Caco-2 (cell line): ENCODE measurements at regions of chr7 and their contacts with region 1.

Region 1: DNA sequence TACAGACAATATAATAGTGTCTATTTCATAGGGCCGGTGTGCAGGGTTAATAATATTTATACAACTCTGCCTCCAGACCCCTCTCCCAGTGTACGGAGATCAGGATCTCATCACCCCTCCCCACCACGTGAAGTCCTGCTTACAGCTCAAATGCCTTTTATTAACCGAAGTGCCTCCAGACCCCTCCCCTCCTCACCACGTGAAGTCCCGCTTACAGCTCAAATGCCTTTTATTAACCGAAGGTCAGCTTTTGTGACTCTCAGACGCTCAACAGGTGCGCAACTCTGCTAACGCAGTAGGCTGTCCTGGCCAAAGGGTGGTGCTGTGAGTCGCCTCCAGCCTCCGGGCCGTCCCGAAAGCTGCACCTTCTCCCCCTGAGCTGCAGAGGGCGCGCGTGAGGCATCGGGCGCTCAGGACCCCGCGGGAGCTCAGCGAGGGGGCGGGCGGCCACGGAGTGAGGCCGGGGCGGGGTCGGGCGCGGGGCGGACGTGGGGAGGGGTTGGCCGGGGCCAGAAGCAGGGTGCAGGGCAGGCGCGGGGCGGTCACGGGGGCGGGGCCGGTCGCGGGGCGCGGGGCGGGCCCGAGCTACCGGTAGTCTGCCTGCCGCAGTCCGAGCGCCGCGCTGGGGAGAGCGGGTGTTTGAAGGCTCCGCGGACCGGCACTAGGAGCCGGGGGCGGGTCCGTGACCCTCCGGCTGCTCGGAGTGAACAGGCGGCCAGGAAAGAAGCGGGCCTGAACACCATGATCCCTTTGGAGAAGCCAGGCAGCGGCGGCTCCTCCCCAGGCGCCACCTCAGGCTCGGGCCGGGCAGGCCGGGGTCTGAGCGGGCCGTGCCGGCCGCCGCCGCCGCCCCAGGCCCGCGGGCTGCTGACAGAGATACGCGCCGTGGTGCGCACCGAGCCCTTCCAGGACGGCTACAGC is at the start of gene STK17A:
- DNase-seq: peak; percentile 92 to 96
- H3K4me3 ChIP-seq: peak within 1 kb of the TSS; percentile 64
- H3K4me3 Mint-ChIP-seq: peak within 1 kb of the TSS; percentile 89
- H3K27ac Mint-ChIP-seq: peak within 1 kb of the TSS; percentile 72
- H3K4me1 ChIP-seq: peaks cover 28% of the 10 kb centered on the region
- H3K4me1 Mint-ChIP-seq: peaks cover 10% of the 10 kb centered on the region
- H3K27me3 ChIP-seq: no peaks in the 10 kb centered on the region
- H3K27me3 Mint-ChIP-seq: no peaks in the 10 kb centered on the region
- CTCF ChIP-seq: peak; percentile 96 to 99
- total RNA-seq, gene STK17A: 19.2 and 19.6 TPM in 2 replicates

Region 2: GRCh38 chr7:43486634-43487033 is 96.1 kb before region 1 on chr7:
- CTCF ChIA-PET with region 1: interaction called, 13 read pairs
- POLR2A ChIA-PET with region 1: interaction called, 7 read pairs
- intact Hi-C with region 1: no loop called
- DNase-seq: no peak
- H3K4me3 ChIP-seq: no peak overlapping the region
- H3K4me3 Mint-ChIP-seq: peak overlapping the region; percentile 53
- H3K27ac Mint-ChIP-seq: peak overlapping the region; percentile 90
- H3K4me1 ChIP-seq: peaks cover 68% of the 10 kb centered on the region
- H3K4me1 Mint-ChIP-seq: peaks cover 55% of the 10 kb centered on the region
- H3K27me3 ChIP-seq: no peaks in the 10 kb centered on the region
- H3K27me3 Mint-ChIP-seq: no peaks in the 10 kb centered on the region
- CTCF ChIP-seq: no peak

Region 3: GRCh38 chr7:43572516-43573049 is 10.2 kb before region 1 on chr7:
- CTCF ChIA-PET with region 1: interaction called, 11 read pairs
- POLR2A ChIA-PET with region 1: no interaction called
- intact Hi-C with region 1: no loop called
- DNase-seq: no peak
- H3K4me3 ChIP-seq: no peak overlapping the region
- H3K4me3 Mint-ChIP-seq: no peak overlapping the region
- H3K27ac Mint-ChIP-seq: no peak overlapping the region
- H3K4me1 ChIP-seq: peaks cover 9% of the 10 kb centered on the region
- H3K4me1 Mint-ChIP-seq: peaks cover 11% of the 10 kb centered on the region
- H3K27me3 ChIP-seq: no peaks in the 10 kb centered on the region
- H3K27me3 Mint-ChIP-seq: no peaks in the 10 kb centered on the region
- CTCF ChIP-seq: no peak

Region 4: DNA sequence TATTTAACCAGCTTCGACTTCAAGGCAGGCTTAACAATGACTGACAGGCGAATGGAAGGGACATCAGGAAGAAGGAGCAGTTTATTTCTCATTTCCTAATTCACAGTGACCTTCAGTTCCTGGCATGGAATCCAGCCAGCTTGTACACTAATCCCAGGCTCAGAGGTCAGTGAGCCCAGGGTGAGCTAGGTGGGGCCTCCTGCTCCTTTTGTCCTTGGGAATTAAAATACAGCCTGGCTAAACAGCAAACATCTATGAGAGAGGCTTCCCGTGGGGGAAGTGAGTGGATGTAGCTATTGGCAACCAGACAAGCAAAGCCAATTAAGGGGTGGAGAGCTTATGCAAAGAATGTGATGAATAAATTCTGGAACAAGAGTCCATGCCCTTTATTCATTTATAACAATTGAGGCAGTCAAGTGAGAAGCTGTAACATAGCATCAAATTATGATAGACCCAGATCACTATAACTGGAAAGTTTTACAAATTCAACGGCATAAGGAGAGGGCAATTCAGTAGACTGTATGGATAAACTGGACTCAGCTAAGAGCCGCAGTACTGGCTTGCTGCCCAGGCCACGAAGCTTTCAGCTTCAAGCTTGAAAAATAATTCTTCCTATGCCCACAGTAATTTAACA is 57.2 kb after region 1 on chr7:
- CTCF ChIA-PET with region 1: interaction called, 7 read pairs
- POLR2A ChIA-PET with region 1: interaction called, 10 read pairs
- intact Hi-C with region 1: no loop called
- DNase-seq: peak in 1 of 2 experiments; percentile 26
- H3K4me3 ChIP-seq: no peak overlapping the region
- H3K4me3 Mint-ChIP-seq: no peak overlapping the region
- H3K27ac Mint-ChIP-seq: peak overlapping the region; percentile 29
- H3K4me1 ChIP-seq: no peaks in the 10 kb centered on the region
- H3K4me1 Mint-ChIP-seq: peaks cover 7% of the 10 kb centered on the region
- H3K27me3 ChIP-seq: no peaks in the 10 kb centered on the region
- H3K27me3 Mint-ChIP-seq: no peaks in the 10 kb centered on the region
- CTCF ChIP-seq: no peak

Region 5: DNA sequence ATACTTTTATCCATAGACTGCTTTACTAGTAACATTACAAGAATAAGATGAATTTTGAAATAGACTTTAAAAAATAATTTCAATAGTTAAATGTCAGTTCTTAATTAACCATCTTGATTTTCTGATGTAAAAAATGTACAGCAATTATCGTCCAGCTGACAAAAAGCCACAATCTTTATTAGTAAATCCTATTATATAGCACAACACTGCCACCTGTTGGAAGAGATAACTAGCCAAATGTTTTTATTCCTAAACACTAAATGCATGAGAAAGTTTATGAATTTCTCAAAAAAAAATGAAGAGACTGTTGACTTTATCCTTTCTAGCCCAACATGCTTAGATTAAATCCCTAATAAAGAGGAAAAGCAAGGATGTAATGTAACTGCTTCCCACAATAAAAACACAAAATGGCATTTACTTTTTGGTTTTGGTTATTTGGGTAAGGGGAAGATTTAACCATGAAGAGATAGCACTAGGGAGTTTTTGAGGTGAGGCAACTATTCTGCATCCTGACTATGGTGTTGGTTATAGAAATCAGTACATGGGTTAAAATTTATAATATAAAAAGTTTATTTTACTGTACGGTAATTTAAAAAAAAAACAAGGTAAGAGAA is 138.5 kb after region 1 on chr7:
- CTCF ChIA-PET with region 1: interaction called, 16 read pairs
- POLR2A ChIA-PET with region 1: no interaction called
- intact Hi-C with region 1: no loop called
- DNase-seq: peak in 1 of 2 experiments; percentile 37
- H3K4me3 ChIP-seq: no peak overlapping the region
- H3K4me3 Mint-ChIP-seq: no peak overlapping the region
- H3K27ac Mint-ChIP-seq: no peak overlapping the region
- H3K4me1 ChIP-seq: no peaks in the 10 kb centered on the region
- H3K4me1 Mint-ChIP-seq: peaks cover 12% of the 10 kb centered on the region
- H3K27me3 ChIP-seq: no peaks in the 10 kb centered on the region
- H3K27me3 Mint-ChIP-seq: no peaks in the 10 kb centered on the region
- CTCF ChIP-seq: peak; percentile 42 to 54

Region 6: DNA sequence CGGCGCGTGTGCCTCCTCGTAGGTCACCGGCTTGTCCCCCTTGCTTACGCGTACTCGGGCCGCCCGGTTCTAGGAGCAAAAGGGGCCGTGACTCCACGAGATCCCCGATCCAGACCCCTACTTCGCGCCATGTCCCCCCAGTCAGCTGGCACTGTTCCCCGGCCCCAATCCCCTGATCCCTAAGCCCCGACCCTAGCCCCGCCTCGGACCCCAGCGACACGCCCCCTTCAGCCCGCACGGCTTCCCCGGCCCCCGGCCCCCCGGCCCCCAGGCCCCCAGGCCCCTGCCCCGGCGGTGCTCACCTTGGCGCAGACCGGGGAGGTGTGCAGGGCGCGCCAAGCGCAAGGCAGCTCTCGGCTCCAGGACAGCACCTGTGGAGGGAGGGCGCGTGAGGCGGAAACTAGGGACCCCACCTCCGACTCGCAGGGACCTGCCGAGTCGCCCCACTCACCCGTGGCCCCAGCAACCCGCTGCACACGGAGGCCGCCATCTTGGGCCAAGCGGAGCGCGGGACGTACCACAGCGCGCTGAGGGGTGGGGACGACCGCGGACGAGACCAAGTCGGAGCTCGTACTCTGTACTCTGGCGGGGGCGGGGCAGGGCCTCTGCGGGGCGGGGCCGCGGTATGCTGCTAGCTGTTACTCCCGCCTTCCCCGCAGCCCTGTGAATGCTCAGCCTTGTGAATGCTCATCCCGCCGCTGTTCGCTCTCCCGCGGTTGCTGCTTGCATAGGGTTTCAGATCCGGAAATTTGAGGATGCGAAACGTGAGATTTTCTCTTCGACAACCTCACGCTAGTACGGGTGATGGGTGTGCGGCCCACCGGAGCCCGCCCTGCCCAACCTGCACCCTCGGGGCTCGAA is 286.5 kb after region 1 on chr7 and contains the start of gene MRPS24:
- CTCF ChIA-PET with region 1: interaction called, 11 read pairs
- POLR2A ChIA-PET with region 1: interaction called, 8 read pairs
- intact Hi-C with region 1: no loop called
- DNase-seq: peak; percentile 94 to 96
- H3K4me3 ChIP-seq: peak within 1 kb of the TSS; percentile 97
- H3K4me3 Mint-ChIP-seq: peak within 1 kb of the TSS; percentile 92
- H3K27ac Mint-ChIP-seq: peak within 1 kb of the TSS; percentile 87
- H3K4me1 ChIP-seq: peaks cover 13% of the 10 kb centered on the region
- H3K4me1 Mint-ChIP-seq: peaks cover 21% of the 10 kb centered on the region
- H3K27me3 ChIP-seq: no peaks in the 10 kb centered on the region
- H3K27me3 Mint-ChIP-seq: no peaks in the 10 kb centered on the region
- CTCF ChIP-seq: no peak
- total RNA-seq, gene MRPS24: 143 and 150 TPM in 2 replicates